ENCODE measurements at regions of chr13 and their contacts with region 1.

Region 1: DNA sequence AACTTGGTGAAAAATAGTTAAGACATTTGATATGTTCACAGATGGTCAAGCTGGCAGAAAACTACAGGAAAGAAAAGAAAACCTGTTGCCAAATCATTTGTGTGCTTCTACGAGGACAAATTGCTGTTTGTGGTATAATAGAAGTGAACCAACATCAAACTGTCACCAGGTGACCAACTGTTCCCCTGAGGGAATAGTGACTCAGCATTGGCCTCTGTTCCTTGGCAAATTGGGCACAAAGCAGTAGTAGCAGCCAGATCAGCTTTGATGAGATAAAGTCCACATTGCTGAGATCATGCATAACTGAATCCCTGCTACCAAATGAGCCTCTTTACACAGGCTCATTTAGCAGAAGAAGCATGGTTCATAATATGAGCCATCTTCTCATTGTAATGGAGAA is 103.5 kb downstream of the POSTN start:
- DNase-seq: no peak
- H3K4me3 ChIP-seq: no peak overlapping the region
- H3K27ac ChIP-seq: no peak overlapping the region
- H3K4me1 ChIP-seq: no peaks in the 10 kb centered on the region
- H3K27me3 ChIP-seq: no peaks in the 10 kb centered on the region
- CTCF ChIP-seq: no peak

Region 2: DNA sequence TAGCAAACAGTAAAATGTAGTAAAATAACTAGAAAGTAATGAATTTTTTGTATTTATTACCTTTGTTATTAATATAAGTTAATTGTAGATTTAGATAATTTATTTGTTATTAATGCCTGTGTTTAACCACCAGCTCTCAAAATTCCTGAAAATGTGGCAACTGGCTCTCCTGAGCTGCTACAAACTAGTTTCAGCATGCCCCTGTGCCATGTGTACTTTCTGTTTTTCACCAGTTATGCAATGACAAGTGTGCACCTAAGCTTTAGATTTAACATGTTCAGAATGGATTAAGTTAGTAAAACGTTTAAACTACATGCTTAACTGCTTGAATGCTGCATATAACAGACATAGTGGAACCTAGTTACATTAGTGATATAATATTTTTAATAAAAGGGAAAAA is 15.4 kb after region 1 on chr13:
- intact Hi-C with region 1: loop called (anchors 2 kb)
- DNase-seq: no peak
- H3K4me3 ChIP-seq: no peak overlapping the region
- H3K27ac ChIP-seq: no peak overlapping the region
- H3K4me1 ChIP-seq: no peaks in the 10 kb centered on the region
- H3K27me3 ChIP-seq: no peaks in the 10 kb centered on the region
- CTCF ChIP-seq: no peak